CD4-positive, alpha-beta memory T cell (primary cell): ENCODE measurements at regions of chr22 and their contacts with region 1.

Region 1: DNA sequence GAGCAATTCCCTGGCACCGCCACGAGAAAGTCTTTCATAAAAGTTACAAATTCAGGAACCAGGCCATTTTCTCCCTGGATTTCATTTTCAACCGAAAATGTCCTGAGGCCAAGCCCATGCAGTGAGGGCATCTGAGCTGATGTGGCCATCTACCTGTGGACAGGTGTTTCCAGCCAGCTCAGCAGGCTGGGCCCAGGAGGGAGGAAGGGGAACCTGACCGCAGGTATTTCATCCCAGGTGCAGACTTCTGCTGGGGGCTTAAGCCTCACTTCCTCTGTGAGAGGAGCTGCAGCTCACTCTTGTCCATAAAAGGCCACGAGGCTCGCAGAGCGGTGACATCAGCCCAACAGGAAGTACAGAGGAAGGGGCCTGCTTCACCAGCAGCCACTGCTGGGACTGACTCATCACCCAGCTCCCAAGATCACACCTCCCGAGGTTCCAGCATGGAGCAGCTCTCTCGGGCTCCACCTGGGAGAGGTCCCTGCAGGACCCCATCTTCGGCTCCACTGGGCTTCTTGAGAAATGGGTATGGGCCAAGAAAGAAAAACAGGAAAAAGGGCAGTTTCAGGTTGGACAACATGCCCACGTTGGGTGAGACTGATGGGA is 56.4 kb downstream of the MYH9 start:
- DNase-seq: peak; percentile 69 to 93 (median 78)
- H3K4me3 ChIP-seq: peak overlapping the region; percentile 14 to 53
- H3K4me3 Mint-ChIP-seq: peak overlapping the region; percentile 87 to 94 (median 88)
- H3K27ac ChIP-seq: peak overlapping the region; percentile 84
- H3K27ac Mint-ChIP-seq: peak overlapping the region; percentile 94 to 99 (median 99)
- H3K4me1 ChIP-seq: peaks cover 94% of the 10 kb centered on the region
- H3K4me1 Mint-ChIP-seq: peaks cover 86 to 100% (median 93%) of the 10 kb centered on the region in 4 donors
- H3K27me3 ChIP-seq: no peaks in the 10 kb centered on the region
- H3K27me3 Mint-ChIP-seq: no peaks in the 10 kb centered on the region

Region 2: DNA sequence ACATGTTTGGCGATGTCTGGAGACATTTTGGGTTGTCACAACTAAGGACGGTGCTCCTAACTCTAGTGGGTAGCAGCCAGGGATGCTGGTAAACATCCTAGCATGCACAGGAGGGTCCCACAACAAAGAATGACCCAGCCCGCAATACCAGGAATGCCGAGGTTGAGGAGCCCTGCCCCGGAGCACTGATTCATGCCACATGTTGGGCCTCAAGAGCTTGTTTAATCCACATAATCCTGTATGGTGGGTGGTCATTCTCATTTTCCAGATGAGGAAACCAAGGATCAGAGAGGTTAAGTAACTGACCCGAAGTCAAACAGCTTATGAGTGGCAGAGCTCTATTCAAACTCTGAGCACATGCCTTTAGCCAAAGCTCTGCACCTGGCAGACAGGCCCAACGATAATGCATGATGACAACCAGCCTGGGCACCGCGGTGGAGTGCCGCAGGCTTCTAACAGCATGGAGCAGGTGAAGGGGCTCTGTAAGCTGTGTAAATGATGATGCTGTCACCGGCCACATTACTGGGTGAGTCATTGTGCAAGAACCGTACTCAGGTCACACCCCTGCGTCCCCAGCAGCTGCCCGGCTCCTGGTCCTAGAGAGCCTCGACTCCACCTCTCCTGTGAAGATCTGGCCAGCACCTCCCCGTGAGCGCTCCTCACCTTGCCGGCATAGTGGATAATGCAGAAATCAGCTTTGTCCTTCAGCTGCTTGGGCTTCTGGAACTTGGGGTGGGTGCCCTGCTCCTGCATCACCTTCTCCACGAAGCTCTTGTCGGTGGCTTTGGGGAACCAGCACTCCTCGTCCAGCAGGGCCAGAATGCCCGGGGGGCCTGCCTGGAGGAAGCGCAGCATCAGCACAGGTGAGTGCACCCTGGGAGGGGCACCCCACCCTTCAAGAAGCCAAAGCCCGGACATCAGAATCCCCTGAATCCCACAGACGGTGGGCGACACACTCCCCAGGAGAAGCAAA is 19.7 kb before region 1 on chr22:
- CTCF ChIA-PET with region 1: interaction called, 3 read pairs
- POLR2A ChIA-PET with region 1: interaction called, 23 read pairs
- intact Hi-C with region 1: no loop called
- DNase-seq: peak in 1 of 5 donors; percentile 28
- H3K4me3 ChIP-seq: no peak overlapping the region
- H3K4me3 Mint-ChIP-seq: no peak overlapping the region
- H3K27ac ChIP-seq: no peak overlapping the region
- H3K27ac Mint-ChIP-seq: peak overlapping the region in 2 of 7 donors; percentile 24 to 30
- H3K4me1 ChIP-seq: no peaks in the 10 kb centered on the region
- H3K4me1 Mint-ChIP-seq: peaks cover 2 to 13% (median 2%) of the 10 kb centered on the region in 4 donors
- H3K27me3 ChIP-seq: no peaks in the 10 kb centered on the region
- H3K27me3 Mint-ChIP-seq: no peaks in the 10 kb centered on the region

Region 3: GRCh38 chr22:36365020-36365411 is 33.6 kb after region 1 on chr22:
- CTCF ChIA-PET with region 1: interaction called, 10 read pairs
- POLR2A ChIA-PET with region 1: interaction called, 2,535 read pairs
- intact Hi-C with region 1: loop called (anchors 5 kb)
- DNase-seq: peak; percentile 84 to 98 (median 88)
- H3K4me3 ChIP-seq: no peak overlapping the region
- H3K4me3 Mint-ChIP-seq: peak overlapping the region; percentile 69 to 92 (median 80)
- H3K27ac ChIP-seq: peak overlapping the region; percentile 91
- H3K27ac Mint-ChIP-seq: peak overlapping the region; percentile 92 to 100 (median 97)
- H3K4me1 ChIP-seq: peaks cover 100% of the 10 kb centered on the region
- H3K4me1 Mint-ChIP-seq: peaks cover 73 to 100% (median 88%) of the 10 kb centered on the region in 4 donors
- H3K27me3 ChIP-seq: no peaks in the 10 kb centered on the region
- H3K27me3 Mint-ChIP-seq: no peaks in the 10 kb centered on the region

Region 4: GRCh38 chr22:36379593-36380361 is 48.4 kb after region 1 on chr22:
- CTCF ChIA-PET with region 1: interaction called, 54 read pairs
- POLR2A ChIA-PET with region 1: interaction called, 2,535 read pairs
- intact Hi-C with region 1: loop called (anchors 2 kb)
- DNase-seq: peak; percentile 58 to 80 (median 67)
- H3K4me3 ChIP-seq: peak overlapping the region; percentile 45 to 55
- H3K4me3 Mint-ChIP-seq: peak overlapping the region; percentile 75 to 92 (median 84)
- H3K27ac ChIP-seq: peak overlapping the region; percentile 70
- H3K27ac Mint-ChIP-seq: peak overlapping the region; percentile 92 to 99 (median 98)
- H3K4me1 ChIP-seq: peaks cover 96% of the 10 kb centered on the region
- H3K4me1 Mint-ChIP-seq: peaks cover 54 to 97% (median 77%) of the 10 kb centered on the region in 4 donors
- H3K27me3 ChIP-seq: no peaks in the 10 kb centered on the region
- H3K27me3 Mint-ChIP-seq: no peaks in the 10 kb centered on the region

Region 5: DNA sequence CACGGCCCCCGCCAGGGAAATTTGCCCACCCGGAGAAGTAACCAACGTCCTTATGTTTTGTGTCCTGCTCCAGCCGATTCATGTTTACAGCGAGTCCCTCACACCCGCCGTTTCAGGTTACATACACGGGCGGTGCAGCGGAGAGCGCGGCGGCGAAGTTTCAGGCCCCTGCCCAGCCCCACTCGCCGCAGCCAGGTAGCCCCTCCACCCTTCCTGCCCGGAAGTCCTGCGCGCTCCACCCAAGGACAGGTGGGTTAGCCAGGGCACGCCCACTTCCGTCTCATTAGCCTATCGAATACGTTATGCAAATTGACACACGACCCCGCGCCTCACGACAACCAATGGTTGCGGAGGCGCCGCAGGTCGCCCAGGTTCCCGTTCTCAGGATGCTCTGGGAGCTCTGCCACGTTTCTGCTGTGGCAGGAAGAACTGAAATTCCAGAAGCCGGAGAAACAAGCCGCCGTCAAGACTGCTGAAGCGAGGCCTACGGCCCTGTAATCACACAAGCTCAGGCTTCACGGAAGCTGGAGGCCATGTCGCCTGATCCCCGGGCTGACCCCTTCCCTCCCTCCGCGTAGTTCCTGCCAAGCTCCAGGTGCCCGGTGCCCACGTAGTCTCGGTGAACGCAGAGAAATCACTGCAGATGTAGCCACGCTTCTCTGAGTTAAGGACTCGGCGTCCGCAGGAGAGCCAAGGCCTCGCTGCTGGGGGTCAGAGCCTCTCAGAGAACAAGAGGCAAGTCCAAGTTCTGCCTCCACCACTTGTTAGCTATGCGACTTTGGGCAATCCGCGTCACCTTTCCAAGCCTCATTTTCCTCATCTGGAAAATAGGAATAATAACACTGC is 78.7 kb after region 1 on chr22:
- CTCF ChIA-PET with region 1: interaction called, 7 read pairs
- POLR2A ChIA-PET with region 1: interaction called, 12 read pairs
- intact Hi-C with region 1: no loop called
- DNase-seq: peak; percentile 58 to 80 (median 64)
- H3K4me3 ChIP-seq: peak overlapping the region in 1 of 2 donors; percentile 44
- H3K4me3 Mint-ChIP-seq: peak overlapping the region; percentile 61 to 79 (median 72)
- H3K27ac ChIP-seq: peak overlapping the region; percentile 49
- H3K27ac Mint-ChIP-seq: peak overlapping the region; percentile 86 to 96 (median 91)
- H3K4me1 ChIP-seq: peaks cover 65% of the 10 kb centered on the region
- H3K4me1 Mint-ChIP-seq: peaks cover 35 to 68% (median 52%) of the 10 kb centered on the region in 4 donors
- H3K27me3 ChIP-seq: no peaks in the 10 kb centered on the region
- H3K27me3 Mint-ChIP-seq: no peaks in the 10 kb centered on the region

Region 6: DNA sequence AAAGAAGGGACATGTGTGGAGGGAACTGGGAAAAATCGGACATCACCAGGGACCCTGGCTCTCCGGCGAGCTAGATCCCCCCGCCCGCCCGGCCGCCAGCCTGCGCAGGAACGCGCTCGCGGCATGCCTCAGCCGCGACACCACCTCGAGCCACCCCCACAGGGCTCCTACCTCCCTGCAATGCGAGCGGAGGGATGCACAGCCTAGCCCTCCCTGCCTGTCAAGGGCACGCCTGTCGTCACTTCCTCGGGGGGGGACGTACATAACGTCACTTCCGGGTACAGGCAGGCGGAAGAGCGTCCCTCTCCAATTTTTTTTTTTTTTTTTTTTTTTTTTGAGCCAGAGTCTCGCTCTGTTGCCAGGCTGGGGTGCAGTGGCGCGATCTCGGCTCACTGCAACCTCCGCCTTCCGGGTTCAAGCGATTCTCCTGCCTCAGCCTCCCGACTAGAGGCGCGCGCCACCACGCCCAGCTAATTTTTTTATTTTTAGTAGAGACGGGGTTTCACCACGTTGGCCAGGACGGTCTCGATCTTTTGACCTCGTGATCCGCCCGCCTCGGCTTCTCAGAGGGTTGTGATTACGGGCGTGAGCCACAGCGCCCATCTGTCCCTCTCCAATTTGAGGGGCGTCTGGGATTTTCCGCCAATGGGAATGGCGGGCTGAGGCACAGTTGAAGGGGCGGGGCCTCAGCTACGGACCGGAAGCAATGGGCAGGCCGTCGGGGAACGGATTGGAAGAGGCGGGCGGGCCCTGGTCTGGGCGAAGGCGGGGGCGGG is 150.2 kb after region 1 on chr22 and contains the start of gene TXN2:
- CTCF ChIA-PET with region 1: interaction called, 8 read pairs
- POLR2A ChIA-PET with region 1: interaction called, 33 read pairs
- intact Hi-C with region 1: no loop called
- DNase-seq: peak; percentile 97 to 99 (median 97)
- H3K4me3 ChIP-seq: peak within 1 kb of the TSS; percentile 80 to 86
- H3K4me3 Mint-ChIP-seq: peak within 1 kb of the TSS; percentile 90 to 100 (median 98)
- H3K27ac ChIP-seq: peak within 1 kb of the TSS; percentile 80
- H3K27ac Mint-ChIP-seq: peak within 1 kb of the TSS; percentile 93 to 100 (median 99)
- H3K4me1 ChIP-seq: peaks cover 22% of the 10 kb centered on the region
- H3K4me1 Mint-ChIP-seq: peaks cover 12 to 31% (median 17%) of the 10 kb centered on the region in 4 donors
- H3K27me3 ChIP-seq: no peaks in the 10 kb centered on the region
- H3K27me3 Mint-ChIP-seq: peaks cover 0 to 3% of the 10 kb centered on the region in 2 donors
- total RNA-seq, gene TXN2: 33.5 to 34.5 TPM

Region 7: DNA sequence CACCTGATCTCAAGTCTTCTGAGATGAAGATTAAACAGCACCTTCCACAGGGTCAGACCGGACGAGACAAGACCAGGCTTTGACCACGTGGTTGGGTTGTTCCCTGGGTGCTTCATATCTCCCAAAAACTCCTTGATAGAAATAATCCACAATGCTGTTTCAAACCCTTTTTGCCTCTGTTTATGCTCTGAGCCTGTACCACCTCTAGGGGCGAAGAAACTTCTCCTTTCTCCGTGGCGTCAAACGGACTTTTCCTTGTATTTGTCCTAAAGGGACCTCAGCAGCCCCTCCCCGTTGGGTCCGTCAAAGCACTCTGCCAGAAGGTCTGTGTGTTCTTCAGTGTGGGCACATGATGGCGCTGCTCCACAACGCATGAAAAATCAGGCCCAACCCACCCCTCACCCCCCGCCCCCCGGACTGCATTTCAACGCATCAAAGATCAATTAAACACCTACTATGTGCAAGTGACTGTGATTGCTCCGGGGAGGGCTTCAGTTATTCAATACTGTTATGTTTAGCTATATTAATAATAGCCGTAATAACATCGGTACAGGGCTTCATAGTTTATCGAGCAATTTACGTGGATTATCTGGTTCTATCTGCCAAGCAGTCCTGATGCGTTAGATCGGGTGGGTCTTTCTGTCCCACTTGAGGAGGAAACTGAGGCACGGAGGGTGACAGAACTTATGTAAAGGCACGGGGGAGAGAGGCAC is 214.8 kb after region 1 on chr22:
- CTCF ChIA-PET with region 1: no interaction called
- POLR2A ChIA-PET with region 1: no interaction called
- intact Hi-C with region 1: no loop called
- DNase-seq: peak in 2 of 5 donors; percentile 12
- H3K4me3 ChIP-seq: no peak overlapping the region
- H3K4me3 Mint-ChIP-seq: no peak overlapping the region
- H3K27ac ChIP-seq: no peak overlapping the region
- H3K27ac Mint-ChIP-seq: no peak overlapping the region
- H3K4me1 ChIP-seq: peaks cover 6% of the 10 kb centered on the region
- H3K4me1 Mint-ChIP-seq: peaks cover 1 to 7% (median 7%) of the 10 kb centered on the region in 4 donors
- H3K27me3 ChIP-seq: no peaks in the 10 kb centered on the region
- H3K27me3 Mint-ChIP-seq: peaks cover 12 to 18% of the 10 kb centered on the region in 2 donors